ENCODE measurements at regions of chr7 and their contacts with region 1.

Region 1: DNA sequence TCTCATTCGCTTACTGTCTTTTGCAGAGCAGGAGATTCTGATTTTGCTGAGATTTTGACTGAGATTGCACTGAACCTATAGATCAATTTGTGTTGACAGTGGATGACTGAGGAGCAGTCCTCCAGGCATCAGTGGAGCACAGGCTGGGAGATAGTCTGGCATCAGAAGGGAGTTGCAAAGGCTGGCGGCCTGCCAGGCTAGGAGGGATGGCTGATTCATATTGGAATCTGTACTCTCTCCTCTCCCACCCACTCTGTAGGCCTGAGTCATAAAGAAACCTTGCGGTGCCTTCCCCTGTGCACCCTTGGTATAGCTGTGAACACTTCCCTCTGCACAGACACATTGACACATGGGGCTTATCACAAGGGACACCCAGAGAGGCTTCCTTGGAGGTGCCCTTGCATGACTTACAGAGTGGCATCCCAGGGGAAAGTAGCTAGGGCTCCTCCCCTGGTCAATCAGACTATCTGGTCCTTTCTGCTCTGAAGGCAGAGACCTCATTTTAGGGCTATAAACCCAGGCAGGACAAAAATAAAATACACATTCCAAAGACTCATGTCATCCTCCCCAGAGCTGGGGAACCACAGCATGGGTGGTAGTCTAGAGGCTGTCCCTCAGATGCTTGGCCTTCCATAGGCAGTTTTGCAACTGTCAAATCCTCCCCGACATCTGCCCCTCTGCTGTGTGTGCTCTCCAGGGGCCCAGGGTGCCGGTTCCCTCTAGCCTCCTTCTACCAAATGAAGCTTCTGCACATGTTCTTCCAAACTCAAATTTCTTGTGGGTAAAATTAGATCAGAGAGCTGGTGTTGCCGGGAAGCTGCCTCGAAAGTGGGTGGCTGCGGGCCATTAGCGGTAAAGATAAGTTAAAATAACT is 37.4 kb upstream of the EEPD1 start:
- DNase-seq: peak; percentile 91 to 96
- ATAC-seq: peak; percentile 61
- H3K4me3 ChIP-seq: no peak overlapping the region
- H3K27ac ChIP-seq: peak overlapping the region; percentile 61 to 100
- H3K4me1 ChIP-seq: peaks cover 5 to 9% of the 10 kb centered on the region in 2 donors
- H3K27me3 ChIP-seq: no peaks in the 10 kb centered on the region

Region 2: GRCh38 chr7:36048141-36048901 is 67.4 kb before region 1 on chr7:
- intact Hi-C with region 1: loop called in 1 of 2 experiments (anchors 5 kb)
- DNase-seq: no peak
- ATAC-seq: peak; percentile 77
- H3K4me3 ChIP-seq: no peak overlapping the region
- H3K27ac ChIP-seq: peak overlapping the region in 1 of 2 donors; percentile 19
- H3K4me1 ChIP-seq: peaks cover 10 to 15% of the 10 kb centered on the region in 2 donors
- H3K27me3 ChIP-seq: no peaks in the 10 kb centered on the region

Region 3: GRCh38 chr7:36227223-36227622 is 111.5 kb after region 1 on chr7:
- intact Hi-C with region 1: no loop called
- DNase-seq: peak in 1 of 2 donors; percentile 66
- ATAC-seq: peak; percentile 55
- H3K4me3 ChIP-seq: no peak overlapping the region
- H3K27ac ChIP-seq: peak overlapping the region; percentile 3 to 82
- H3K4me1 ChIP-seq: peaks cover 0 to 3% of the 10 kb centered on the region in 2 donors
- H3K27me3 ChIP-seq: no peaks in the 10 kb centered on the region

Region 4: GRCh38 chr7:36291387-36292316 is 176.0 kb after region 1 on chr7:
- intact Hi-C with region 1: loop called (anchors 2 to 5 kb)
- DNase-seq: peak; percentile 89 to 96
- ATAC-seq: peak; percentile 95
- H3K4me3 ChIP-seq: peak overlapping the region in 1 of 2 donors; percentile 16
- H3K27ac ChIP-seq: peak overlapping the region; percentile 84 to 87
- H3K4me1 ChIP-seq: no peaks in the 10 kb centered on the region
- H3K27me3 ChIP-seq: no peaks in the 10 kb centered on the region

Measured in aorta (tissue), 5 donors.